Posterior vena cava (tissue), 2 donors: ENCODE measurements at regions of chr18 and their contacts with region 1.

Region 1: DNA sequence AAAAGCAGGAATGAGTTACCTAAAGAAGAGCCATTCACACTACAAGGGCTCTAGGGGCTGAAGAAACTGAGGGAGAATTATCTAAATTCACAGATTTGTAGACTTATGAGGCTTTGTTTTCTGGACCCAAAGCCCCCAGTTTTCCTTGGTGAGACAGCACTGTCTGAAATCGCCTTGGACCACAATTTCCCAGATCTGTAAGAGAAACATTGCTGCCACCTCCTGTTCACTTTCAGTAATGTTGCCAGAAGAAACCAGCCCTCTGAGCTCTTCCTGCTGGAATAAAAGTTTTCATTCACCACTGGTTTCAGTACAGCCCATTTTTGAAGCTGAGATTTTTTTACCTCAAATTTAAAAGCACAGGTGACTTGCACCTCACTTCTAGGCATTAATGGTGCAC is 169.2 kb downstream of the CDH20 start:
- DNase-seq: no peak

Region 2: DNA sequence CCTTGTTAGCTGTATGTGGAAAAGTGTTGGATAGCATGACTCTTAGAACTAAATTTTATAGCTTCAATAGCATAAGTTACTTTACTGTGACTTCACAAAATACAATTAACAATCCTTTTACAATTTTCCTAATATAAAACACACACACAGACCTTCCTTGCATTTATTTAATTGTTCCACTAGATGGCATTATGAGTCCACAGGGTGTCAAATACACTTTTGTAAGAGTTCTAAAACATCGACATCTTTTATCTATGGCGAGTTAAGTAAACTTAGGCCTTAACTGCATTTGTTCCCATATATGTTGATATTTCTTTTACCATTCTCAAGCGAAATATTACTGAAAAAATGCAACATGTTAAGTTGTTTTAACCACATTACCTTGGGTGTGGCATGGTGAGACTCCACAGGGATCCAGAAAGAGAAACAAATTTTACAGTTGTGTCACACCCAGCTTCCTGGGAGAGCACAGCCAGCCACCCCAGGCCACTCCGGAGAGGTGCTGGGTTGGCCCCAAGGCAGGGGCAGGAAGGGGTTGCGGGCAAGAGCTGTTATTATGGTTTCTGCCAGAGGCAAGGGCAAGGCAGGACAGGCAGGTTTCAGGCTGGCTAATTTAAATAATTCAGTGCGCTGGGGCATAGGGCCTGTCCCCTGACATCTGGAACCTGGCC is 817.5 kb before region 1 on chr18:
- intact Hi-C with region 1: loop called (anchors 5 to 10 kb)
- DNase-seq: no peak

Region 3: DNA sequence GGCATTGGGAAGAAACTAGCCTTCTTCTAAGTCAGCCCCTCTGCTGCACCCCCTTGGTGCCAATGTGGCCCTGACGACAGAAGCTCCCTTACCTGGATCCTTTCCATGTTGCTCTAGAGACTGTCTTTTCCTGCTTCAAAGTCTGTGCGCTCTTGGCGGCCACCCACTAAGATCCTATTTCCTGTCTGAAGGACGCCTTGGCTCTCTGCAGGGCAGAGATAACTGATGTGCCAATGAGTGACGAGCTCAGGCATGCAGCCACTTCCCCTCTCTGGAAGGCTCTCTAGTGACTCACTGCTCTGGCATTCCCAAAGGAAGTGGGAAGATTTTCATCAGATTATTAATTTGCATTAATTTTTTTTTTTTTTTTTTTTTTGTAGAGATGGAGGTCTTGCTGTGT is 104.3 kb after region 1 on chr18:
- intact Hi-C with region 1: no loop called
- DNase-seq: peak; percentile 94